Psoas muscle (tissue), 8 donors: ENCODE measurements at regions of chr12 and their contacts with region 1.

Region 1: GRCh38 chr12:94074980-94075928 is 73.1 kb upstream of the PLXNC1 start:
- DNase-seq: peak; percentile 65 to 77
- ATAC-seq: peak; percentile 72 to 90 (median 80)
- H3K4me3 ChIP-seq: peak overlapping the region; percentile 27
- H3K27ac ChIP-seq: peak overlapping the region; percentile 67
- H3K4me1 ChIP-seq: peaks cover 21% of the 10 kb centered on the region
- H3K27me3 ChIP-seq: no peaks in the 10 kb centered on the region
- CTCF ChIP-seq: peak; percentile 60

Region 2: GRCh38 chr12:93979189-93979588 is 96.1 kb before region 1 on chr12:
- intact Hi-C with region 1: loop called in 1 of 2 experiments (anchors 5 kb)
- DNase-seq: no peak
- ATAC-seq: no peak
- H3K4me3 ChIP-seq: no peak overlapping the region
- H3K27ac ChIP-seq: no peak overlapping the region
- H3K4me1 ChIP-seq: peaks cover 10% of the 10 kb centered on the region
- H3K27me3 ChIP-seq: no peaks in the 10 kb centered on the region
- CTCF ChIP-seq: peak; percentile 46

Region 3: GRCh38 chr12:94012590-94012989 is 62.7 kb before region 1 on chr12:
- intact Hi-C with region 1: no loop called
- DNase-seq: no peak
- ATAC-seq: no peak
- H3K4me3 ChIP-seq: no peak overlapping the region
- H3K27ac ChIP-seq: no peak overlapping the region
- H3K4me1 ChIP-seq: no peaks in the 10 kb centered on the region
- H3K27me3 ChIP-seq: no peaks in the 10 kb centered on the region
- CTCF ChIP-seq: no peak

Region 4: DNA sequence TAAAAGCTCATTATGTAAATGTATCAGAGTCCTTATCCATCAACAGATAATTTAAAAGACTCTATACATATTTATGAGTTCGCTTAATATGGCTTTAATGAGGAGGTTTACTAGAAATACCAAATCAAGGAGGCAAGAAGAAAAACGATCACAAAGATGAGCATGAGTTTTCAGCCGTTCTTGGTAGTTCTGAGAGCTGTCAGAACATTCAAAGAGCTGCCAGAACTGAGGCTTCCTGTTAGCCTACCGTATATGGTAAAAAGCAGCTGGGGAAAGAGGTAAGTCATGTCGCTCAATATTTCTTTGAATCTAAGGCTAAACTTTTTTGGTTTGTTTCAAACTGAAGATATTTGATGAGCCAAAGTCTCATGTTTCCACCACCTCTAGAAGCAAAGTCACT is 42.2 kb before region 1 on chr12:
- intact Hi-C with region 1: no loop called
- DNase-seq: no peak
- ATAC-seq: no peak
- H3K4me3 ChIP-seq: no peak overlapping the region
- H3K27ac ChIP-seq: no peak overlapping the region
- H3K4me1 ChIP-seq: no peaks in the 10 kb centered on the region
- H3K27me3 ChIP-seq: no peaks in the 10 kb centered on the region
- CTCF ChIP-seq: no peak